Esophagus muscularis mucosa (tissue), 4 donors: ENCODE measurements at regions of chr3 and their contacts with region 1.

Region 1: GRCh38 chr3:128725932-128726690 is at the start of gene RAB7A:
- DNase-seq: peak; percentile 99
- H3K4me3 ChIP-seq: peak within 1 kb of the TSS; percentile 88 to 100 (median 97)
- H3K27ac ChIP-seq: peak within 1 kb of the TSS; percentile 98 to 99 (median 99)
- H3K4me1 ChIP-seq: peaks cover 34 to 49% (median 46%) of the 10 kb centered on the region in 4 donors
- H3K27me3 ChIP-seq: no peaks in the 10 kb centered on the region
- CTCF ChIP-seq: peak in 1 of 3 experiments; percentile 34
- EP300 ChIP-seq: peak; percentile 33
- POLR2A ChIP-seq: peak; percentile 97
- total RNA-seq, gene RAB7A: 81.0 to 116 (median 87.0) TPM

Region 2: DNA sequence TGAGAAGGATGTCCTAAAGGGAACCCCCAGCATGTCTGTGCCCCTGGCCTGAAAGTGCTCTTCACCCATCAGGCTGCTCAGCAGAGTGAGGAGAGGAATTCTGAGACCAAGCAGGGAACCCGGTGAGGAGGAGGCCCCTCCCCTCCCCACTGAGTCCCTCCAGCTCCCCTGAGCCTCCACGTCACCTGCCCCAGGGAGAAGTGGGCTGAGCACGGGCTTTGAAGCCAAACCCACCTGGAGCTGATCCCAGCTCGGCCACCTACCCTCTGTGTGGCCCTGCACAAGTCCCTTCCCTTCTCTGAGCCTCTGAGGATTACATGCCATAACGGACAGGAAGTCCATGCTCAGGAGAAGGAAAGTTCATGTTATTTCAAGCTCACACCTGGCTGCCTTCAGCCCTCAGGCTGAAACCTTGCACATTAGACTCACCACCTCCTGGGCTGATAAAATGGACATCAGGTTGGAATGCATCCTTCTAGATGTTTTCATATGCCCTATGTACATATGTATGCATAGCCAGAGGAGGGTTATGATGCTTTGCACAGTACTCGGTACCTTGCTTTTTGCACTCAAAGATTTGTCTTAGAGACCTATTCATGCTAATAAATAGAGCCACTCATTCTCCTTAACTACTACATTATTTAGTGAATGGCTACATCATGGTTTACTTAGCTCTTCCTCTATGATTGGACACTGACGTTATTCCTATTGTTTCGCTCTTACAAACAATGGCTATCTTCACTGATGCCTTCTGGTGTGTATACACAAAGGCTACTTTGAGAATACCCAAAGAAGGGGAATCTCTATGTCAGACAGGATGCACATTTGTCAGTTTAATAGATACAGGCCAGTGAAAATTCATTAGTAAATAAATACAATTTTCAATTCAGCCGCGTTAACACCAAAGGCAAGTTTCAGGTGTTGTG is 201.5 kb before region 1 on chr3:
- intact Hi-C with region 1: no loop called
- DNase-seq: peak; percentile 78
- H3K4me3 ChIP-seq: no peak overlapping the region
- H3K27ac ChIP-seq: no peak overlapping the region
- H3K4me1 ChIP-seq: no peaks in the 10 kb centered on the region
- H3K27me3 ChIP-seq: peaks cover 0 to 58% (median 0%) of the 10 kb centered on the region in 4 donors
- CTCF ChIP-seq: no peak
- EP300 ChIP-seq: no peak
- POLR2A ChIP-seq: no peak

Region 3: DNA sequence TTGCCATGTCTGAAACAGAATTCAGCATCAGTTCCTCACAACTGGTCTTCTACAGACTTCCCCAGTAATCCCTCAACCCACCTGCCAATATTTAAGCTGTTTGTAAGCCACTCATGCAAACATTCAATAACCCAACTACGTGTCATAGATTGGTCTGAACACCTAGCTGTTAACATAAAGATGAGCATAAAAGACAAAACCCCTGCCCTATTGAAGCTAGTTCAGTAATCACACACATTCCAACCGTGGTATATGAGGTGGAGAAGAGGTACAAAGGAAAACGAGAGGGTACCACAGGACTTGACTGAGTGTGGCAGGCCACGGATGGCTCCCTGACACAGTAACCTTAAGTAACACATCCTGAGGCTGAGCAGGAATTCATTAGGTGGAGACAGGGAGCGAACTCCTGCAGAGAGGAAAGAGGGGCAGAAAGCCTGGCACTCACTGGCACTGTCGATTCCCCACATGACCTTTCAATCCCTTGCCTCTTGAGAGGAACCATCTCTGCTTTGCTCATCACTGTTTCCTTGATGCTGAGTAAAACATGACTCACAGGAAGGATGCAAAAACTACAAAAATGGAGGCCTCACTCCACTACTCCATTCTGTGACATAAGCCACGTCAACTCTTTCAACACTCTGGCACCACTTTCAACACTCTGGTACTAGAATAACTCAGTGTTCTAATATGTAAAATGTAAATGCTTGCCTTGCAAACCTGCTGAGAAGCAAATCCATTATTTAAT is 106.8 kb before region 1 on chr3:
- intact Hi-C with region 1: no loop called
- DNase-seq: no peak
- H3K4me3 ChIP-seq: peak overlapping the region in 1 of 4 donors; percentile 74
- H3K27ac ChIP-seq: peak overlapping the region in 3 of 4 donors; percentile 30 to 88 (median 87)
- H3K4me1 ChIP-seq: peaks cover 29 to 50% (median 40%) of the 10 kb centered on the region in 4 donors
- H3K27me3 ChIP-seq: no peaks in the 10 kb centered on the region
- CTCF ChIP-seq: no peak
- EP300 ChIP-seq: no peak
- POLR2A ChIP-seq: no peak

Region 4: GRCh38 chr3:128794770-128795649 is 68.9 kb after region 1 on chr3:
- intact Hi-C with region 1: loop called (anchors 5 kb)
- DNase-seq: peak; percentile 93
- H3K4me3 ChIP-seq: no peak overlapping the region
- H3K27ac ChIP-seq: peak overlapping the region; percentile 21 to 54 (median 54)
- H3K4me1 ChIP-seq: peaks cover 33 to 54% (median 43%) of the 10 kb centered on the region in 4 donors
- H3K27me3 ChIP-seq: no peaks in the 10 kb centered on the region
- CTCF ChIP-seq: peak; percentile 80 to 85 (median 81)
- EP300 ChIP-seq: no peak
- POLR2A ChIP-seq: no peak

Region 5: DNA sequence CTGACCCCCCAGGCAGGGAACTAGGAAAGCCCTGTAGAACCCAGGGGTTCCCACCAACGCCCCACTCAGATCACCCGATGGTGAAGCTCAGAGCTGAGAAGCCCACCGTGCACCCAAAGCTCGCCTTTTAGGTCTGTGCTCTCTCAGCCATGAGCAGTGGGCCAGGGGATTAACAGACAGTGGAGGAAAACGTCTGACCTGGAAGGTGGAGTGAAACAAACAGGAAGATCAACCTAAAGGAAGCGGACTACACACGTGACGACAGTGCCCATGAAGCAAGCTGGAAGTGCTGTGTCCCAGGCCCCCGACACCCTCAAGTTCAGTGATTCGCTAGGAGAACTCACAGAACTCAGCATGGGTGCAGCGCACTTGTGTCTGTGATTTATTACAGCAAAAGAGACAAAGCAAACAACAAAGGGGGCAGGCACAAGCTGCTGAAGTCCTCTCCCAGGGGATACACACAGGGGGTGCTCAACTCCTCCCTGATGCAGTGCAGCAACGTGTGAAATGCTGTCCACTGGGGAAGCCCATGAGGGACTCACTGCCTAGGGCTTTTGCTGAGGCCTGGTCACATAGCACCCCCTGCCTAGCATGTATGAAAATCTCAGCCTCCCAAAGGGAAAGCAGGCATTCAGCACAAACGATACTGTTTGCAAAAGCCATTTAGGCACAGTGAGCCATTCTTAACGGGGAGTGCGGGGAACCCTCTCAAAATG is 224.3 kb after region 1 on chr3:
- intact Hi-C with region 1: no loop called
- DNase-seq: no peak
- H3K4me3 ChIP-seq: no peak overlapping the region
- H3K27ac ChIP-seq: no peak overlapping the region
- H3K4me1 ChIP-seq: peaks cover 0 to 10% (median 4%) of the 10 kb centered on the region in 4 donors
- H3K27me3 ChIP-seq: no peaks in the 10 kb centered on the region
- CTCF ChIP-seq: no peak
- EP300 ChIP-seq: no peak
- POLR2A ChIP-seq: no peak

Region 6: GRCh38 chr3:129809297-129809696 is 1083.2 kb after region 1 on chr3:
- intact Hi-C with region 1: no loop called
- DNase-seq: no peak
- H3K4me3 ChIP-seq: no peak overlapping the region
- H3K27ac ChIP-seq: no peak overlapping the region
- H3K4me1 ChIP-seq: peaks cover 0 to 8% (median 7%) of the 10 kb centered on the region in 4 donors
- H3K27me3 ChIP-seq: no peaks in the 10 kb centered on the region
- CTCF ChIP-seq: no peak
- EP300 ChIP-seq: no peak
- POLR2A ChIP-seq: no peak